Activated T-helper 2 cell treated with anti-CD3 and anti-CD28 coated beads, Interferon-gamma antibody, Interleukin-2, Interleukin-4, amounts not matched to agents 10 μg/mL and 5 μg/mL and 100 μg/mL, durations not matched to agents 14 hours and 24 hours and 36 hours (primary cell): ENCODE measurements at regions of chr12 and their contacts with region 1.

Region 1: DNA sequence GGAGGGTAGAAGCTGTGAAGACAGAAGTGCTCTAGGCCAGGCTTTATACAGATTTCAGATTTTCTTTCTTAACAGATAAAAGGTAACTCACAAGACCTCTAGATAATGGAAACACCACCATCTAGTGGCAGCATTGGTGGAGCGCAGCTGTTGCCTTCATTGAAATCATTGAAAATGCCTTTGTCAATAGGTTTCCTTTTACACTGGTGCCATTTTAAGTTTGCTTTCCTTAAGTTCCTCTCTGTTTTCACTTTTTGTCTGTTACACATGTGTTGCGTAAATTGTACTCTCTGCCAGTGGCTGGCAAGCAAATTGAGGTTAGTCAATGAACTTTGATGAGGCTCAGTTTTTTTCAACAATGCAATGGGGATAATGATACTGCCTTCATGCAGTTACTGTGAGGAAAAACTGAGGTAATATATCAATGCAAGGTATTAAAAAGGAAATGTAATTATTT is 31.1 kb downstream of the ALDH1L2 start:
- DNase-seq: peak; percentile 67
- H3K4me3 Mint-ChIP-seq: no peak overlapping the region
- H3K27ac Mint-ChIP-seq: no peak overlapping the region
- H3K4me1 Mint-ChIP-seq: peaks cover 6% of the 10 kb centered on the region
- H3K27me3 Mint-ChIP-seq: peaks cover 3% of the 10 kb centered on the region

Region 2: GRCh38 chr12:104201238-104202001 is 851.7 kb before region 1 on chr12:
- intact Hi-C with region 1: loop called (anchors 2 kb)
- DNase-seq: peak; percentile 29
- H3K4me3 Mint-ChIP-seq: no peak overlapping the region
- H3K27ac Mint-ChIP-seq: no peak overlapping the region
- H3K4me1 Mint-ChIP-seq: no peaks in the 10 kb centered on the region
- H3K27me3 Mint-ChIP-seq: peaks cover 20% of the 10 kb centered on the region

Region 3: DNA sequence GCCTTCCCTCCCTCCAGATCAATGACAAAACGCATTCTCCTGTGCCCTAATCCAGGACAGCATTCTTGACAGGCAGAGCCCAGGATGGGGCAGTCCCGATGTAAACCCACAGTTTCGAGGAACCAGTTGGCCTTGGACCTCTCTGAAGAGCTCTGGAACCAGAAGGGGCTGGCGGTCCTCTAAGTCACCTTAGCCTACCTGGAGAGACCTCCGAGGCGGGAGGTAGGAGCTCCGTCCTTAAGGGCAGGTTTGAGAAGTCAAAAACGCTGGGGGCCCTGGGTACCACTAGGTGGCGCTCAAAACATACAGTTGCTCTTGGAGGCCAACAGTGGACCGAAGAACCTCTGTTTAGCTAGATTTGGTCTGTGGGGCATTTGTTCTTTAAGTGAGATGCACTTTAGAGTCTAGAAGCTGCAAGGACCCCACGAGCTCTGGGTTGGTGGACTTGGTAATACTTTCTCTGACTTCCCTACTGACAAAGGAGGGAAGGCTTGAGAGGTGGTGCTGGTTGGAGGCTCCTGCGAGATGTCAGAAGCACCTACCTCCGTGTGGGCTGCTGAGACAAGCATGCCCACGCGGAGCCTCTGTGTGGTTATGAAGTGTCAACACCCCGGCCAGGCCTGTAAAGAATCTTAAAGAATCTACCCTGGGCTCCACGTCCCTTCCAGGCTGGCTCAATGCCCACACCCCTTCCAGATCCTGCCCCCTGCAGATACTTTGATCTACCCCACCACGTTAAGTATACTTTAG is 671.2 kb before region 1 on chr12:
- intact Hi-C with region 1: loop called (anchors 1 kb)
- DNase-seq: peak; percentile 63
- H3K4me3 Mint-ChIP-seq: no peak overlapping the region
- H3K27ac Mint-ChIP-seq: no peak overlapping the region
- H3K4me1 Mint-ChIP-seq: peaks cover 13% of the 10 kb centered on the region
- H3K27me3 Mint-ChIP-seq: peaks cover 9% of the 10 kb centered on the region

Region 4: GRCh38 chr12:104494137-104494792 is 558.9 kb before region 1 on chr12:
- intact Hi-C with region 1: loop called (anchors 10 kb)
- DNase-seq: no peak
- H3K4me3 Mint-ChIP-seq: peak overlapping the region; percentile 56
- H3K27ac Mint-ChIP-seq: peak overlapping the region; percentile 85
- H3K4me1 Mint-ChIP-seq: peaks cover 80% of the 10 kb centered on the region
- H3K27me3 Mint-ChIP-seq: no peaks in the 10 kb centered on the region

Region 5: DNA sequence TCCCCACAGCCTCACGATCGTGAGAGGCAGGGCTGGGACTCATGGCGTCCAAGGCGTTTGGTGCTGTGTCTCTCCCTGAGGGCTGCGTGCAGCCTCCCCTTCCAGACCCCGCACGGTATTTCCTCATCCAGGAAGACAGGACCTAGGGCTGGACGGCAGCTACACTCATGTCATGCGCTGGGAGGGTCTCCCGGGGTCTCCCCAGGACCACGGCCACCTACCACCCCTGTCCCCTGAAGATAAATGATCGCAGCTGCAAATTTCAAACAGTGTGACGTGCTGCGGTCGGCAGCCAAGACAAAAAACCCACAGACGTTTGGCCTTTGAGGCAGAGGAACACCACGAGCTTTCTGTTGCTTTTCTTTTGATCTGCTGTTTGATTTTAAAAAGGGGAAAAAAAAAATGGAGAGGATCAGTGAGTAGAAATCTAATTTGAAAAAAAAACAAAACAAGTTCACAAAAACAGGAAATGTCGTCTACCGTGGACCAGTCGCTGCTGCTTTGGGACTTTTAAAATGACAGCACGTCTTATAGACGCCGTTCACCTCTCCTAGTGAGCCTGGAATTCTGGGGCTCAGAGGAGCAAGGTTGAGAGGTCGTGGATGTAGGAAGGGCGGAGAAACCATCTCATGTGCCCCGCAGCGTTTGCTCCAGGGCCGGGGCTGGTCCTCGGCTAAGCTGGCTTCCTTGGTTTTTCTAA is 332.7 kb before region 1 on chr12:
- intact Hi-C with region 1: loop called (anchors 5 kb)
- DNase-seq: peak; percentile 67
- H3K4me3 Mint-ChIP-seq: peak overlapping the region; percentile 76
- H3K27ac Mint-ChIP-seq: peak overlapping the region; percentile 94
- H3K4me1 Mint-ChIP-seq: peaks cover 47% of the 10 kb centered on the region
- H3K27me3 Mint-ChIP-seq: no peaks in the 10 kb centered on the region

Region 6: DNA sequence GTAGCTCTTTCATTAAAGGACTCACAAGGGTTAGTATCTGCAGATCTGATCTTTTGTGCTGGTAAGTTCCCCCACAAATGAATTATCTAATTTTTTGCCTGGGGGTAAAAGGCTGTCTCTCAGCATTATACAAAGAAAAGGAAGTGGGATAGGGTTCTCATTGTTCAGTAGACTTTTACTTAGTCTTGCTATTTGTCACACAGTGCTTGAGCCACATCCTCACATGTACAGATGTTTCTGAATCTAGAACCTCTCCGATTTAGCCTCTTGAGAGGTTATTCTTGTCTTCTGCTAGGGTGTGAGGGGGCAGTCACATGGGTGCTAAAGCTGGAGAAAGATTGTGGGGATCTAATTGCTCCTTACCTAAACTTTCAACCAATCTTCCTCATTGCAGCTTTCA is 188.1 kb before region 1 on chr12:
- intact Hi-C with region 1: loop called (anchors 10 kb)
- DNase-seq: no peak
- H3K4me3 Mint-ChIP-seq: no peak overlapping the region
- H3K27ac Mint-ChIP-seq: no peak overlapping the region
- H3K4me1 Mint-ChIP-seq: peaks cover 12% of the 10 kb centered on the region
- H3K27me3 Mint-ChIP-seq: peaks cover 15% of the 10 kb centered on the region

Region 7: GRCh38 chr12:104986022-104986941 is 66.9 kb before region 1 on chr12 and contains the start of gene NOPCHAP1:
- intact Hi-C with region 1: loop called (anchors 5 kb)
- DNase-seq: peak; percentile 81
- H3K4me3 Mint-ChIP-seq: peak within 1 kb of the TSS; percentile 88
- H3K27ac Mint-ChIP-seq: peak within 1 kb of the TSS; percentile 69
- H3K4me1 Mint-ChIP-seq: peaks cover 35% of the 10 kb centered on the region
- H3K27me3 Mint-ChIP-seq: peaks cover 9% of the 10 kb centered on the region
- total RNA-seq, gene NOPCHAP1: 25.2 and 29.6 TPM in 2 replicates